ENCODE measurements at regions of chr18 and their contacts with region 1.

Region 1: GRCh38 chr18:12891561-12891960 is 7.5 kb upstream of the PTPN2 start:
- DNase-seq: no peak
- H3K4me3 Mint-ChIP-seq: no peak overlapping the region
- H3K27ac Mint-ChIP-seq: no peak overlapping the region
- H3K4me1 Mint-ChIP-seq: peaks cover 12% of the 10 kb centered on the region
- H3K27me3 Mint-ChIP-seq: peaks cover 15% of the 10 kb centered on the region

Region 2: GRCh38 chr18:12744103-12744502 is 147.5 kb before region 1 on chr18:
- CTCF ChIA-PET with region 1: interaction called, 24 read pairs
- POLR2A ChIA-PET with region 1: no interaction called
- DNase-seq: no peak
- H3K4me3 Mint-ChIP-seq: no peak overlapping the region
- H3K27ac Mint-ChIP-seq: no peak overlapping the region
- H3K4me1 Mint-ChIP-seq: peaks cover 10% of the 10 kb centered on the region
- H3K27me3 Mint-ChIP-seq: no peaks in the 10 kb centered on the region

Region 3: GRCh38 chr18:12904012-12904516 is 12.5 kb after region 1 on chr18:
- CTCF ChIA-PET with region 1: interaction called, 19 read pairs
- POLR2A ChIA-PET with region 1: no interaction called
- DNase-seq: peak; percentile 73
- H3K4me3 Mint-ChIP-seq: peak overlapping the region; percentile 35
- H3K27ac Mint-ChIP-seq: peak overlapping the region; percentile 90
- H3K4me1 Mint-ChIP-seq: peaks cover 8% of the 10 kb centered on the region
- H3K27me3 Mint-ChIP-seq: peaks cover 12% of the 10 kb centered on the region

Region 4: DNA sequence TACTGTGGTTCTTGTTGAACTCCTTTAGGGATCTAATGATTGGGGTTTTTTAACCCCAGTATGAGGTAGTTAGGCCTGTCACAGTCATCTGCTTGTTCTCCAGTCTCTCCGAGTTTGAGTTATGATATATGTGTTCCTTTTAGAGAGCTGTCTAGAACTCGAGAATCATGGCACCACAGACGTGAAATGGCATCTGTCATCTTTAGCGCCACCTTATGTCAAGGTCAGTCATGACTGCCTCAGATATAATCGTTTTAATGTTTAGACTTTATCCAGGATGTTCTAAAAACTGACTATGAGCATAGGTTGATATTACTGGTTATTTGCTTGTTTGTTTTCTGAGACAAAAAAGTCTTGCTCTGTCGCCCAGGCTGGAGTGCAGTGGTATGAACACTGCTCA is 211.8 kb after region 1 on chr18:
- CTCF ChIA-PET with region 1: no interaction called
- POLR2A ChIA-PET with region 1: no interaction called
- DNase-seq: no peak
- H3K4me3 Mint-ChIP-seq: no peak overlapping the region
- H3K27ac Mint-ChIP-seq: no peak overlapping the region
- H3K4me1 Mint-ChIP-seq: peaks cover 6% of the 10 kb centered on the region
- H3K27me3 Mint-ChIP-seq: no peaks in the 10 kb centered on the region